ENCODE measurements at regions of chr10 and their contacts with region 1.

Region 1: GRCh38 chr10:84352251-84352842 is 24.0 kb downstream of the CCSER2 start:
- DNase-seq: peak; percentile 62
- H3K4me3 ChIP-seq: no peak overlapping the region
- H3K27ac ChIP-seq: no peak overlapping the region
- H3K4me1 ChIP-seq: peaks cover 5% of the 10 kb centered on the region
- H3K27me3 ChIP-seq: no peaks in the 10 kb centered on the region
- CTCF ChIP-seq: peak; percentile 89 to 93

Region 2: GRCh38 chr10:84375011-84375410 is 22.7 kb after region 1 on chr10:
- CTCF ChIA-PET with region 1: no interaction called
- dilution Hi-C with region 1: no loop called
- in situ Hi-C with region 1: no loop called
- intact Hi-C with region 1: loop called (anchors 1 kb)
- DNase-seq: peak; percentile 51
- H3K4me3 ChIP-seq: no peak overlapping the region
- H3K27ac ChIP-seq: no peak overlapping the region
- H3K4me1 ChIP-seq: no peaks in the 10 kb centered on the region
- H3K27me3 ChIP-seq: no peaks in the 10 kb centered on the region
- CTCF ChIP-seq: peak; percentile 71 to 75

Region 3: DNA sequence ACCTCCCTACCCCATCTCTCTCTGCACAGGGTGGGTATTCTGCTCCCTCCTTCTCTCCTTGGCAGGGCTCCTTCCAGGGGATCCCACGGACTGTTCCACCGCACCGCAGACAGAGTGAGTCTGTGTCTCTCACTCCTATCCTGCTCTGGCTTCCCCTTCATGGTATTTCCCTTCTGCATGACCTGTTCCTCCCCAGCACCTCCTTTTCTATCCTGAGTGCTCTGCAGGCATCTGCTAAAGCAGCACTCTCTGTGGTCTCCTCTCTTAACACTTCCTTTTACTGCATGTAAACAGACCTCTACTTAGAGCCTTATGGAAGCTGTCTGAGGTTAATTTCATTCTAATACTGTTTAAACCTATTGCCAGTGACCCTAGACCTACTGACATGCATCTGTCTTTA is 147.5 kb after region 1 on chr10:
- CTCF ChIA-PET with region 1: no interaction called
- dilution Hi-C with region 1: no loop called
- in situ Hi-C with region 1: no loop called
- intact Hi-C with region 1: no loop called
- DNase-seq: no peak
- H3K4me3 ChIP-seq: no peak overlapping the region
- H3K27ac ChIP-seq: no peak overlapping the region
- H3K4me1 ChIP-seq: peaks cover 7% of the 10 kb centered on the region
- H3K27me3 ChIP-seq: no peaks in the 10 kb centered on the region
- CTCF ChIP-seq: no peak